BJ (cell line): ENCODE measurements at regions of chr17 and their contacts with region 1.

Region 1: DNA sequence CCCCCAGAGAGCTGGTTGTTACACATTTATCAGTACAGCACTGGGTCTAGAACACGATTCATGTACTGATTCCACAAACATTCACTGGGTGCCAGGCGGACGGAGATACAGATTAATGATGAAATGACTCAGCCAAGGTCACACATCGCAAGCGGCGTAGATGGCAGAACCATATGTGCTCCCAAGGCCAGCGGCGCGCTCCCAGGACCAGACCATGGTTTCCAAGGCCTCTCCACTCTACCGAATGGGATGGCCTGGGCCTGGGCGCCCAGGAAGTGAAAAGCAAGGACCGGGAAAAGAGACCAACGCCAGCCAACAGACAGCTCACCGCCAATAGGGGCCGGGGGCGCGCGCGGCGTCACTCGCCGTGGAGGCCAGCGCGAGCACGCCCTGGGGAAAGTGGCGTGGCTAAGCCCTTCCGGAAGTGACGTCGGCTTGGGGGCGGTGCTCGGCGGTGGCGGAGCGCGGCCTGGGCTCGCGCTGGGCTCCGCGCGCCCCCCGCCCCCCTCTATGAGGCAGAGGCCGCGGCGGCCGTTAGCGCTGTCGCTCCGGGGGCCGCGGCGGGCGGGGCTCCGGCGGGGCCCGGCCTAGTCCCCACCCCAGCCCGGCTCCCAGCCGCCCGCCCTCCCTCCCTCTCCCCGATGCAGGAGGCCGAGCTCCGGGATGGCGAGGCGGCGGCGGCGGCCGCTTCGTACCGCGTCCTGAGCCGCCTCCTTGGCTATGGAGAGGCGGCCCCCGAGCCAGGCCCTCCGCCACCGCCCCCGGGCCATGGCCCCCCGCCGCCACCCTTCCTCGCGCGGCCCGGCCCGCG is at the start of gene SOCS7:
- DNase-seq: peak; percentile 41
- H3K4me3 ChIP-seq: peak within 1 kb of the TSS; percentile 83
- H3K27me3 ChIP-seq: no peaks in the 10 kb centered on the region
- CTCF ChIP-seq: no peak
- polyA plus RNA-seq, gene SOCS7: 7.4 and 9.2 TPM in 2 replicates

Region 2: DNA sequence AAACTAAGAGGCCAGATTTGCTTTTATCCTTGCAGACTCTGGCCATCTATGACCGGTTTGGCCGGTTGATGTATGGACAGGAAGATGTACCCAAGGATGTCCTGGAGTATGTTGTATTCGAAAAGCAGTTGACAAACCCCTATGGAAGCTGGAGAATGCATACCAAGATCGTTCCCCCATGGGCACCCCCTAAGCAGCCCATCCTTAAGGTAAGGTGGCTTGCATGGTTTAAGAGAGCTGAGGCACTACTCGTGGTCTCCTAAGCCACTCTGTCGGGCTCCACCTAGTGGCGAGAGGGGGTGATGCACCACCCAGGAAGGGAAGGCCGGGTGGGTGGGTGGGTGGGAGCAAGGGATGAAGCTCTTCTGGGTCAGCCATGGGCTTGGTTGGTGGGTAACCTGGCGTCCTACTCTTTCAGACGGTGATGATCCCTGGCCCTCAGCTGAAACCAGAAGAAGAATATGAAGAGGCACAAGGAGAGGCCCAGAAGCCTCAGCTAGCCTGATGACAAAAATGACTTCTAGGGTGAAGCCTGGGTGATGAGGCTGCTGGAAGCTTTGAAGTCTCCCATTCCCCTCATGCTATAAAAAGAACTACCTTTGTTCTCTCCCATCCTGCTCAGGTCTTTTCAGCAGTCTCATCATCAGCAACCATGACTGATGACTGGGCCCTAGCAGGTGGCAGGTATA is 29.4 kb before region 1 on chr17:
- CTCF ChIA-PET with region 1: interaction called, 15 read pairs
- POLR2A ChIA-PET with region 1: interaction called, 4 read pairs
- DNase-seq: no peak
- H3K4me3 ChIP-seq: no peak overlapping the region
- H3K27me3 ChIP-seq: no peaks in the 10 kb centered on the region
- CTCF ChIP-seq: peak; percentile 76

Region 3: GRCh38 chr17:38341035-38341721 is 10.4 kb before region 1 on chr17:
- CTCF ChIA-PET with region 1: interaction called, 30 read pairs
- POLR2A ChIA-PET with region 1: interaction called, 5 read pairs
- DNase-seq: no peak
- H3K4me3 ChIP-seq: no peak overlapping the region
- H3K27me3 ChIP-seq: peaks cover 32% of the 10 kb centered on the region
- CTCF ChIP-seq: no peak

Region 4: GRCh38 chr17:38403491-38403890 is 51.9 kb after region 1 on chr17:
- CTCF ChIA-PET with region 1: interaction called, 13 read pairs
- POLR2A ChIA-PET with region 1: no interaction called
- DNase-seq: no peak
- H3K4me3 ChIP-seq: no peak overlapping the region
- H3K27me3 ChIP-seq: no peaks in the 10 kb centered on the region
- CTCF ChIP-seq: no peak

Region 5: DNA sequence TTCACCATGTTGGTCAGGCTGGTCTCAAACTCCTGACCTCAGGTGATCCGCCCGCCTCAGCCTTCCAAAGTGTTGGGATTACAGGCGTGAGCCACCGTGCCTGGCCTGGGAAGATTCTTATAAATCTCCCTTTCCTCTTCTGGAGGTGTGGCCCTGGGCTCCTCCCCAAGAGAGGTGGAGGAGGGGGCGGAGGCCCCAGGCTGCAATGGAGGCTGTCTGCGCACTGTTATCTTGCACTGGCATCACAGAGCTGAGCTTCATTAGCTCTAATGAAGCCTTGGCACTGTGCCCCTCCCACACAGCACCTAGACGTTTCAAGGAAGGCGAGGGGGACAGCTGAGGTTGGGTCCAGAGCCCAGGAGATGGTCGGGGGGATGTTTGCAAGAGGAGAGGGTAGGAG is 84.2 kb after region 1 on chr17:
- CTCF ChIA-PET with region 1: no interaction called
- POLR2A ChIA-PET with region 1: no interaction called
- DNase-seq: no peak
- H3K4me3 ChIP-seq: no peak overlapping the region
- H3K27me3 ChIP-seq: no peaks in the 10 kb centered on the region
- CTCF ChIP-seq: no peak

Region 6: DNA sequence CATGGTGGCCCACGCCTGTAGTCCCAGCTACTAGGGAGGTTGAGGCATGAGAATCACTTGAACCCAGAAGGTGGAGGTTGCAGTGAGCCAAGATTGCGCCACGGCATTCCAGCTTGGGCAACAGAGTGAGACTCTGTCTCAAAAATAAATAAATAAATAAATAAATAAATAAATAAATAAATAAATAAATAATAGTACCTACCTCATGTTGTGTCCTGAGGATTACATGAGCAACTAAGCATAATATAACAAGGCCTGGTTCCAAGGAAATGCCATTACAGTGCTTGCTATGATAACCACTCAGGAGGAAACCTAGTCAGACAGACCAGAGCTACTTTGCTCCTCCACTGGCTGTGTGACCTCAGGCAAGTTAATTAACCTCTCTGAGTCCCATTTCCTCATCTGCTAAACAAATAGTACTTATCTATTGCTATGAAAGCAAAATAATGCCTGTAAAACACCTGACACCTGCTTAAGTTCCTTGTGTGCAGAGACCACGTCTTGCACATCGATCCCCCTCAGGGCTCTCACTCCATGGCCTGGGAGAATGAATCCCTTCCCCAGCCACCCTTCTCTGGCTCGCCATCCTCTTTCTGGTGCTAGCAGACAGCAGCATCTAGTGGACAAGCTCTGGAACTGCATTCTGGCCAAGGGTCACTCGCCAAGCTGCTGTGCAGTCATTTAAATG is 315.6 kb after region 1 on chr17:
- CTCF ChIA-PET with region 1: interaction called, 10 read pairs
- POLR2A ChIA-PET with region 1: no interaction called
- DNase-seq: no peak
- H3K4me3 ChIP-seq: no peak overlapping the region
- H3K27me3 ChIP-seq: peaks cover 33% of the 10 kb centered on the region
- CTCF ChIP-seq: peak; percentile 100